Dendritic cell treated with granulocyte-macrophage colony-stimulating factor and Interleukin-4, amounts not matched to agents 40 ng/mL and 50 ng/mL, for 4 days (primary cell): ENCODE measurements at regions of chr11 and their contacts with region 1.

Region 1: GRCh38 chr11:7513234-7514098 is at the start of gene PPFIBP2:
- H3K4me3 Mint-ChIP-seq: peak within 1 kb of the TSS; percentile 86
- H3K27ac Mint-ChIP-seq: no peak within 1 kb of the TSS
- H3K4me1 Mint-ChIP-seq: peaks cover 23% of the 10 kb centered on the region
- H3K27me3 Mint-ChIP-seq: no peaks in the 10 kb centered on the region

Region 2: GRCh38 chr11:6667733-6668374 is 845.6 kb before region 1 on chr11:
- intact Hi-C with region 1: no loop called
- H3K4me3 Mint-ChIP-seq: no peak overlapping the region
- H3K27ac Mint-ChIP-seq: peak overlapping the region; percentile 54
- H3K4me1 Mint-ChIP-seq: peaks cover 14% of the 10 kb centered on the region
- H3K27me3 Mint-ChIP-seq: peaks cover 6% of the 10 kb centered on the region

Region 3: GRCh38 chr11:7442588-7443215 is 70.8 kb before region 1 on chr11:
- intact Hi-C with region 1: loop called (anchors 2 kb)
- H3K4me3 Mint-ChIP-seq: no peak overlapping the region
- H3K27ac Mint-ChIP-seq: no peak overlapping the region
- H3K4me1 Mint-ChIP-seq: peaks cover 22% of the 10 kb centered on the region
- H3K27me3 Mint-ChIP-seq: peaks cover 4% of the 10 kb centered on the region

Region 4: DNA sequence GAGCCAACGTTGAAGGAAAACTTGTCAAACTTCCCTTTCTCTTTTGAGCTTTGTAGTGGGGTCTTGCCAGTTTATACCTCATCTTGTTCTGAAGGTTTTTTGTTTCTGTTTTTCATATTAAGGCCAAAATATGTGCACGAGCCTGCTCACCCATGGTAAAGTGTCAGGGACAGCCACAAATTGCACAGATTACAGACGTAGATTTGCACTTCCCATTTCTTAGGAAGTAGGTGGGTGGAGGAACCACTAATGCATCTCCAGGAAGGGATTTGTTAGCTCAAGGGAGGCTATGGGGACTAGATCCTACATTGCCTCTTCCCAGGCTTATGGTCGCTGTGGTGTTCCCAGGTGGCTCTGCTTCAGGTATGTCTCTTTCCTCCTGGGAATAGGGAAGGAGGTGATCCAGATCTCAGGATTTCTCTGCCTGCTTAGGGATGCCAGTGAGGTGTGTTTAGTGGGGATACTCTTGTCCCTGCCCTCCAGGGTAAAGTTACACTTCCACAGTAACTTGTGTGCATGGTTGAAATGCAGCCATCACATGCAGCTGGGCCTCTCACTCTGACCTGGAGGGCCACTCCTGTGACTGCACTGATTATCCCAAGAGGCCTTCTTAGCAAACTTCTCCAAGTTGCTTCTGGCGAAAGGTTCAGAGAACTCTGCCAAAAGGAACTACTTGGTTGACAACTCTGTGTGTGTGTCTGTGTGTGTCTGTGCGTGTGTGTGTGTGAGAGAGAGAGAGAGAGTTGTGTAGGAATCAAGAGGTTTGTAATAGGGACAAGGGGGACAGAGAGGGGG is 10.1 kb after region 1 on chr11:
- intact Hi-C with region 1: loop called (anchors 1 kb)
- H3K4me3 Mint-ChIP-seq: peak overlapping the region; percentile 73
- H3K27ac Mint-ChIP-seq: no peak overlapping the region
- H3K4me1 Mint-ChIP-seq: no peaks in the 10 kb centered on the region
- H3K27me3 Mint-ChIP-seq: no peaks in the 10 kb centered on the region

Region 5: GRCh38 chr11:7551576-7551975 is 38.1 kb after region 1 on chr11:
- intact Hi-C with region 1: loop called (anchors 5 kb)
- H3K4me3 Mint-ChIP-seq: no peak overlapping the region
- H3K27ac Mint-ChIP-seq: no peak overlapping the region
- H3K4me1 Mint-ChIP-seq: peaks cover 62% of the 10 kb centered on the region
- H3K27me3 Mint-ChIP-seq: no peaks in the 10 kb centered on the region